Adrenal gland (tissue), 19 donors: ENCODE measurements at regions of chr12 and their contacts with region 1.

Region 1: GRCh38 chr12:68364893-68365725 is 32.9 kb upstream of the MDM1 start:
- DNase-seq: peak; percentile 77 to 95 (median 93)
- H3K4me3 ChIP-seq: peak overlapping the region in 2 of 4 donors; percentile 5 to 42
- H3K27ac ChIP-seq: peak overlapping the region; percentile 44 to 94 (median 78)
- H3K4me1 ChIP-seq: peaks cover 6 to 13% of the 10 kb centered on the region in 2 donors
- H3K27me3 ChIP-seq: no peaks in the 10 kb centered on the region
- CTCF ChIP-seq: no peak
- POLR2A ChIP-seq: peak; percentile 41 to 76

Region 2: DNA sequence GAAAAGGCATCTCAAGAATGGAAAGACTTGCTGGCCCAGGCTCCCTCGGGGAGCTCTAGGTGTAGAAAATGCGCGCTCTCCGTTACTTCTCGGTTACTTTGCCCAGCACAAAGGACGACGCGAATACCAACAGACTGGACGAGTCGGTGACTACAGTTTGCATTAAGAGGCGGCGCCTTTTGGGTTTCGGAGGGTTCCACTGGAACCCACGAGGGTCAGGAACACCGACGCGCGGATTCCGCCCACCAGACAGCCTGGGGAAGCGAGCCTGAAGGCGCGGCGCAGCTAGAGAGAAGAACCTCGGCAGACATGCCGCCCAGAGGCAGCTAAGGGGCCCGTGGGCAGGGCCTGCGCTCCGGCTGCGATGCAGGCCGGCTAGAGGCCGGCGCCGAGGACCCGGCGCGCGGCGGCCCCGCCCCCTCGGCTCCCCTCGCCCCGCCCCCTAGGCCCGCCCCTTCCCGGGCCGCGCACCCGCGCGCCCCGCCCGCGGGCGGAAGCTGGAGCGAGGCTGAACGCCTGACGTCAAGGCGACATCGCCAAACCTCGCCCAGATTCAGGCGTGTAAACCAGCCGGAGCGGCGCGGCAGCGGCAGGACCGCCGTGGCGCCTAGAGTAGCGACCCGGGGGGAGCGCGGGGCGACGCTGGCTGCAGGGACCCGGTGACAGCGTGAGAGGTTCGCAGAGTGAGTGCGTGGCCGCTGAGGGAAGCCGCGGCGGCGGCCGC is 245.4 kb after region 1 on chr12 and contains the start of gene RAP1B:
- intact Hi-C with region 1: loop called in 1 of 2 experiments (anchors 5 kb)
- DNase-seq: peak; percentile 89 to 95 (median 91)
- H3K4me3 ChIP-seq: peak within 1 kb of the TSS; percentile 55 to 88 (median 61)
- H3K27ac ChIP-seq: peak within 1 kb of the TSS; percentile 93 to 99 (median 96)
- H3K4me1 ChIP-seq: peaks cover 26 to 37% of the 10 kb centered on the region in 2 donors
- H3K27me3 ChIP-seq: no peaks in the 10 kb centered on the region
- CTCF ChIP-seq: no peak
- POLR2A ChIP-seq: peak; percentile 85 to 98
- total RNA-seq, gene RAP1B: 113 to 302 (median 167) TPM

Region 3: DNA sequence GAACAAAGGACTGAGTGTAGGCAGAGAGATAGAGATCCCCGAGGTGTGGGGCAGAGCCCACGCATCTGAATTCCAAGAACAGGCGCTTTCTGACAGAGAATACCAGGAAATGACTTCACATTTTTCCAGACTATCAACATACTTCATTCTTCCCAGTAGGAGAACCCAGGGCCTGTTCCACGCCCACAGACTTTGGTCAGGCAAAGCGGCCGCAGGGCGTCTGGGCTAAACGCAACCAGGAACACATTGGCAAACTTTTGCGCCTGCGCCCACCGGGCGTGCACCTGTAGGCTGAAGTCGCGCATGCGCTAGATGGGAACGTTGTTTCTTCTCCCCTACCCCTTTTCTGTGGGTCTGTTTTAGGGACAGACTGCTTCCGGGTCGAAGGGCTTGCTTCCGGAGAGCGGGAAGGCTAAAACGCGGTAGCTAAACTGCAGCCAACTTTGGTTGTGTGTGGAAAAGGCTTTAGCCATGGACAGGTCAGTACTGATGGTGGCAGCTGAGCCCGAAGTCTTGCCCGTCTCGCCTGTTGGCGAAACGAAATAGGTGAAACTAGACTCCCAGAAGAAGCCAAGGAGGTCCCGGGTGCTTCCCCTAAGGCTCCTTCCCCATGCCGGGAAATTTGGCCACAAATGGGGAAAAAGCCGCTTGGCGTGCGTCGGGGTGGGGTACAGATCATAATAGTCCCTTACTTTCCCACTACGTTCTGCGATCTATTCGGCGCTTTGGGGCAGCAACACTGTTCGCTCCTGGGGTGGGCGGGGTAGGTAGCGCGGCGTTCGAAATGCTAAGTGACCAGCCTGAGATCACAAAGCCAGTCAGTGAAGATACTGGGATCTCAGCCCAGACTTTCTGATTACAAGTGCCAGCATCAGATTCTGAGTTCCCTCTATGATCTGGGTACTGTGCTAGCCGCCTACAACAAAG is 321.7 kb after region 1 on chr12 and contains the start of gene NUP107:
- intact Hi-C with region 1: loop called in 1 of 2 experiments (anchors 10 kb)
- DNase-seq: peak; percentile 98 to 100 (median 99)
- H3K4me3 ChIP-seq: peak within 1 kb of the TSS; percentile 44 to 89 (median 77)
- H3K27ac ChIP-seq: peak within 1 kb of the TSS in 4 of 5 donors; percentile 71 to 79 (median 74)
- H3K4me1 ChIP-seq: peaks cover 5 to 8% of the 10 kb centered on the region in 2 donors
- H3K27me3 ChIP-seq: no peaks in the 10 kb centered on the region
- CTCF ChIP-seq: peak in 4 of 6 experiments; percentile 18 to 42 (median 28)
- POLR2A ChIP-seq: peak; percentile 18 to 70
- total RNA-seq, gene NUP107: 18.0 to 51.6 (median 31.7) TPM